Activated naive CD4-positive, alpha-beta T cell treated with anti-CD3 and anti-CD28 coated beads, Interleukin-2, amount 10 ng/mL, durations not matched to agents 7 days and 5 days (primary cell): ENCODE measurements at regions of chr18 and their contacts with region 1.

Region 1: DNA sequence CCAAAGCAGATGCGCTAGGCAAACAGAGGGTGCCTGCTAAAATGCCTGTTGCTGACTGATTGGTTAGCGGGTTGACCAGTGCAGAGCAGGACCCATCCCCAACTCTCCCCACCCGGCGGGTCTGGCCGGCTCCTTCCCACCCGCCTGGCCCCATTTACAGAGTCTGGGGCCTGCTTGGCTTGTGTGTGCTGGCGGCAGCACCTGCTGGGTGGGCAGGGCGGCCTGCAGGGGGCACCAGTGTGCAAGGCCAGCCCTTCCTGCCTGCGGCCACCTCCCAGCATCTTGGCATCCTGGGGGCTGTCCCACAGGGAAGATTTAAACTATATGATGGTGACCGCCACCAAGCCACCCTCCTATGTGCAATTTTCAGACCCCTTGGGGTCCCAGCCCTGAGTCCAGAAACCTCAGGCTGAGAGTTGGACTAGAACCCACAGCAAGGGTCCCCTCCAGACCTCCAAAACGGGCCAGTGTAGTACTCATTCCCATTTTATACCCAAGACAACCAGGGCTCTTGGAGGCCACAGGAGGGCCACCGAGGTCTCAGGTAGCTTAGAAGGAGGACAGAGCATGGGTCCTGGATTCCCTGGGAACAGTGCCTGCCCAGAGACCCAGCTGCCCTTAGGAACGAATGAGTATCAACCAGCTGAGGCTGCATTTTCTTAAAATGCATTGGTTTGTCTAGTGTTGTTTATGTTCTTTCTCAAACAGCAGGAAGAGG is 173.6 kb downstream of the SMAD7 start:
- DNase-seq: peak; percentile 75
- H3K4me3 Mint-ChIP-seq: no peak overlapping the region
- H3K27ac Mint-ChIP-seq: no peak overlapping the region
- H3K4me1 Mint-ChIP-seq: peaks cover 8% of the 10 kb centered on the region
- H3K27me3 Mint-ChIP-seq: peaks cover 40% of the 10 kb centered on the region

Region 2: GRCh38 chr18:48913201-48913600 is 136.0 kb after region 1 on chr18:
- CTCF ChIA-PET with region 1: interaction called, 13 read pairs
- DNase-seq: peak; percentile 65
- H3K4me3 Mint-ChIP-seq: no peak overlapping the region
- H3K27ac Mint-ChIP-seq: no peak overlapping the region
- H3K4me1 Mint-ChIP-seq: peaks cover 42% of the 10 kb centered on the region
- H3K27me3 Mint-ChIP-seq: peaks cover 29% of the 10 kb centered on the region

Region 3: GRCh38 chr18:49041435-49042245 is 264.5 kb after region 1 on chr18:
- CTCF ChIA-PET with region 1: interaction called, 14 read pairs
- DNase-seq: peak; percentile 72
- H3K4me3 Mint-ChIP-seq: no peak overlapping the region
- H3K27ac Mint-ChIP-seq: no peak overlapping the region
- H3K4me1 Mint-ChIP-seq: peaks cover 6% of the 10 kb centered on the region
- H3K27me3 Mint-ChIP-seq: no peaks in the 10 kb centered on the region